Right lobe of liver (tissue), 6 donors: ENCODE measurements at regions of chr10 and their contacts with region 1.

Region 1: DNA sequence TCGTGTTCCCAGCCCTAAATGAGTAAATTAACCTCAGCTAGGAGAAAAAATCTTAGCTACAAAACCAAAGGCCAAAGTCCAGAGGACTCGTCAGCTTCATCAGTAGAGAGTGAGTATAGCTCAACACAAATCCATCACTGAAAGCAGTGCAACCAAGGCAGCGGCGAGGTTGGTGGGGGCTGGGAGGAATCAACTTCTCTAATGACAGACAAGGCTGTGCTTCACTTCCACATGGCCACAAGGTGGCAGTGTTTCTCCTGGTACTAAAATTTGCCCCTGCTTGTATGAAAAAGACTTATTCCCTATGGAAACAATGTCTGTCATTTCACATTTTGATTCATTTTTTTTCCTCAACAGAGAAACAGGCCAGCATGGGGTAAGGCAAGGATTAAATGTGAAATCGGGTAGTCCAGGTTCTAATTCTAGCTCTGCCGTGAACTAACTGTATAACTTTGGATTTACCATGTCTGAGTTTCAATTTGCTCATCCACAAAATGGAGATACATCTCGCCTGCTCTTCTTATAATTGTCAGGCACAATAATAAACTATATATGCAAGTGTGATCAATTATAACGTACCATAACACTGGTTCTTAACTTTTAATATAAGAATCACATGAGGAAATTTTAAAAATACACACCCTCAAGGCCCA is 39.3 kb downstream of the FAS start:
- DNase-seq: peak; percentile 67 to 74 (median 71)
- ATAC-seq: peak; percentile 90 to 93 (median 92)
- H3K4me3 ChIP-seq: no peak overlapping the region
- H3K27ac ChIP-seq: no peak overlapping the region
- H3K4me1 ChIP-seq: peaks cover 0 to 6% (median 0%) of the 10 kb centered on the region in 4 donors
- H3K27me3 ChIP-seq: no peaks in the 10 kb centered on the region
- CTCF ChIP-seq: peak; percentile 90 to 95 (median 94)
- POLR2A ChIP-seq: no peak

Region 2: GRCh38 chr10:89207181-89207800 is 177.4 kb after region 1 on chr10 and contains the start of gene CH25H:
- intact Hi-C with region 1: loop called (anchors 10 kb)
- DNase-seq: peak; percentile 59 to 75 (median 71)
- ATAC-seq: peak; percentile 77 to 87 (median 80)
- H3K4me3 ChIP-seq: peak within 1 kb of the TSS; percentile 23 to 47 (median 34)
- H3K27ac ChIP-seq: peak within 1 kb of the TSS; percentile 31 to 58 (median 37)
- H3K4me1 ChIP-seq: peaks cover 0 to 19% (median 6%) of the 10 kb centered on the region in 4 donors
- H3K27me3 ChIP-seq: peaks cover 0 to 33% of the 10 kb centered on the region in 2 donors
- CTCF ChIP-seq: no peak
- POLR2A ChIP-seq: no peak
- total RNA-seq, gene CH25H: 0.31 to 1.2 (median 0.60) TPM in 4 of 6 experiments, not detected in the others